ENCODE measurements at regions of chr9 and their contacts with region 1.

Region 1: GRCh38 chr9:129482521-129483414 is 138.1 kb downstream of the C9orf50 start:
- DNase-seq: peak; percentile 84
- ATAC-seq: peak; percentile 72
- H3K4me3 ChIP-seq: peak overlapping the region; percentile 67
- H3K27ac ChIP-seq: peak overlapping the region; percentile 98
- H3K4me1 ChIP-seq: peaks cover 37% of the 10 kb centered on the region
- H3K27me3 ChIP-seq: no peaks in the 10 kb centered on the region
- CTCF ChIP-seq: no peak

Region 2: DNA sequence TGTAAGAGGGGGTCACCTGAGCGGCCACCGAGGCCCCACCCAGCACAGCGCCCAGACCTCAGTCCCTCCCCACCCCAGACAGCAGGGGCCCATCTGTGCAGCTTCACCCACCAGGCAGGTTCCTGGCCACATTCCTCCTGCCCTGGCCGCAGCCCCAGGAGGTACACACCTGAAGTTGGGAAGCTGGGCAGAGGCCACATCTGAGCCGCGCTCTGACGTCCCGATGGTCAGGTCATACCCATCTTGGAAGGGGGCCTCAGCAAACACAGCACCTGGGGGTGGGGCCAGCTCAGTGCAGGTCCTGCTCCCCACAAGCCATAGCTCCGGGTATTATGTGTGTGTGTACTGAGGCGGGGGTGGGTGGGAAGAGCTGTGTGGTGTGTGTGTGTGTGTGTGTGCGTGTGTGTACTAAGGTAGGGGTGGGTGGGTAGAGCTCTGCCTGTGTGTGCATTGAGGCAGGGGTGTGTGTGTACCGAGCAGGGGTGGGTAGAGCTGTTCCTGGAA is 658.8 kb before region 1 on chr9:
- CTCF ChIA-PET with region 1: no interaction called
- POLR2A ChIA-PET with region 1: interaction called, 43 read pairs
- intact Hi-C with region 1: no loop called
- DNase-seq: no peak
- ATAC-seq: no peak
- H3K4me3 ChIP-seq: no peak overlapping the region
- H3K27ac ChIP-seq: no peak overlapping the region
- H3K4me1 ChIP-seq: peaks cover 10% of the 10 kb centered on the region
- H3K27me3 ChIP-seq: no peaks in the 10 kb centered on the region
- CTCF ChIP-seq: no peak

Region 3: DNA sequence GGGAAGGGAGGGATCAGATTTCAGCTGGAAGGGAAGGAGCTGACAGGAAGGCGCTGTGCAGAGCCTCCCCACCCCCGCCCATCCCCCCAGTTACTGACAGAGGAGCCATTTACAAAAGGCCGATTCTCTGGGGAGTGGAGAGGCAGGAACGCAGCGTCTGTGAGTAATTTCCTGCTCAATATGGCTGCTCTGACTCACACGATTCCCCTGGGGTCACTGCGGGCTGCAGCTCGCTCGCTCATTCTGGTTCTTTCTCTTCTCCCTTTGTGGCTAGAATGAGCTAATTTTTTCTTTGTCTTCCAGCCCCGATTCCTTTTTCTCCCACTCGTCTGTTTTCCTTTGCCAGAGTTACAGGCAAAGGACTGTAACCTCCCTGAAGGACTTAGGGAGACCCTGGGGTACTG is 342.8 kb before region 1 on chr9:
- CTCF ChIA-PET with region 1: interaction called, 3 read pairs
- POLR2A ChIA-PET with region 1: interaction called, 3 read pairs
- intact Hi-C with region 1: loop called (anchors 10 kb)
- DNase-seq: peak; percentile 95
- ATAC-seq: peak; percentile 74
- H3K4me3 ChIP-seq: peak overlapping the region; percentile 60
- H3K27ac ChIP-seq: peak overlapping the region; percentile 100
- H3K4me1 ChIP-seq: peaks cover 30% of the 10 kb centered on the region
- H3K27me3 ChIP-seq: no peaks in the 10 kb centered on the region
- CTCF ChIP-seq: no peak

Region 4: GRCh38 chr9:129377181-129377580 is 105.6 kb before region 1 on chr9:
- CTCF ChIA-PET with region 1: no interaction called
- POLR2A ChIA-PET with region 1: interaction called, 11 read pairs
- intact Hi-C with region 1: no loop called
- DNase-seq: no peak
- ATAC-seq: no peak
- H3K4me3 ChIP-seq: no peak overlapping the region
- H3K27ac ChIP-seq: no peak overlapping the region
- H3K4me1 ChIP-seq: peaks cover 1% of the 10 kb centered on the region; the same call in 1 of the 2 replicates
- H3K27me3 ChIP-seq: no peaks in the 10 kb centered on the region
- CTCF ChIP-seq: no peak

Measured in PC-3 (cell line).